ENCODE measurements at regions of chr6 and their contacts with region 1.

Region 1: GRCh38 chr6:33248925-33249731 is 22.5 kb downstream of the VPS52 start:
- DNase-seq: peak; percentile 99
- H3K4me3 ChIP-seq: peak overlapping the region; percentile 37 to 64 (median 54)
- H3K27ac ChIP-seq: peak overlapping the region; percentile 89 to 94 (median 94)
- H3K4me1 ChIP-seq: peaks cover 0 to 27% (median 24%) of the 10 kb centered on the region in 4 donors
- H3K27me3 ChIP-seq: no peaks in the 10 kb centered on the region
- CTCF ChIP-seq: no peak
- EP300 ChIP-seq: no peak
- POLR2A ChIP-seq: peak; percentile 88 to 95

Region 2: DNA sequence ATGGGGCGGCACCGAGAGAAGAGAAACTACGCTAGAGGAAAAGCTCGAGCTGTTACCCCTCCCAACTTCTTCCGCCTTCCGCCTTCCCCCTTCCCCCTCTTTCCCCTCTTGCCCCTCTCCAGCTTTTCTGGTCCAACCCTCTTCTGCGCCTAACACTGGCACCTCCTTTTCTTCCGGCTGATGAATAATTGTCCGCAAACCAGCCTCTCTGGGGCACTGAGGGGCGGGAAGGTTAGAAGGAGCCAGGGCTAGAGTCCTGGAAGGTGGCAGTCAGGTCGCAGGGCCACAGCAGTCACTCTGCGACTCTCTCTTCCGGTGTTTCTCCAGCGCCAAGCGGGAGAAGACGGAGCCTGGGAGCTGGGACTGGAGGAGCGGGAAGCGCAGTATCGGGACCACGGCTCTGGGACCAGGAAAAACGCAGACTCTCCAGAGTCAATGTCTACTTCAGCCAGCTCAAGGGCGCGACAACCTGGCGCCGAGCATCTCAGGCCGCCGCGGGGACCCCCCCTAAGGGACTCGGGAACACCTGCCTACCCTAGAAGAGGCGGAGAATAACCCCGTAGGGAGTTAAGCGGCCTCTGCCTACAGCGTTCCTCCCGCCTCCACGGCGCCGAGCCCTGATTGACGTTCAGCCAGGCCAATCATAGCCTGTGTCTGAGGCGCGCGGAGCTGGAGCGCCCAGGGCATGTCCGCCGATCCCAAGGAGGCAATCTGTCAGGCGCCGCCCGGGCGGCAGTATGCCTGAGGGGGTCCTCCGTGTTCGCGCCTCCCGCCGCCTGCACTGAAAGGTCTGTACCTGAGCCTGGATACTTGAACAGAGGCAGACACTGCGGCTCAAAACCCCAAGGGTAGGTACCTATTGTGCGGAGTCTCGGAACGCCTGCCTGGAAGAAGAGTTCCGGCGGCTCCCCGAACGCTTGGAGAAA is 354.8 kb before region 1 on chr6:
- intact Hi-C with region 1: loop called (anchors 5 kb)
- DNase-seq: peak; percentile 96
- H3K4me3 ChIP-seq: peak overlapping the region; percentile 55 to 75 (median 69)
- H3K27ac ChIP-seq: peak overlapping the region; percentile 82 to 96 (median 92)
- H3K4me1 ChIP-seq: peaks cover 0 to 25% (median 13%) of the 10 kb centered on the region in 4 donors
- H3K27me3 ChIP-seq: no peaks in the 10 kb centered on the region
- CTCF ChIP-seq: no peak
- EP300 ChIP-seq: no peak
- POLR2A ChIP-seq: peak in 1 of 2 donors; percentile 84

Region 3: DNA sequence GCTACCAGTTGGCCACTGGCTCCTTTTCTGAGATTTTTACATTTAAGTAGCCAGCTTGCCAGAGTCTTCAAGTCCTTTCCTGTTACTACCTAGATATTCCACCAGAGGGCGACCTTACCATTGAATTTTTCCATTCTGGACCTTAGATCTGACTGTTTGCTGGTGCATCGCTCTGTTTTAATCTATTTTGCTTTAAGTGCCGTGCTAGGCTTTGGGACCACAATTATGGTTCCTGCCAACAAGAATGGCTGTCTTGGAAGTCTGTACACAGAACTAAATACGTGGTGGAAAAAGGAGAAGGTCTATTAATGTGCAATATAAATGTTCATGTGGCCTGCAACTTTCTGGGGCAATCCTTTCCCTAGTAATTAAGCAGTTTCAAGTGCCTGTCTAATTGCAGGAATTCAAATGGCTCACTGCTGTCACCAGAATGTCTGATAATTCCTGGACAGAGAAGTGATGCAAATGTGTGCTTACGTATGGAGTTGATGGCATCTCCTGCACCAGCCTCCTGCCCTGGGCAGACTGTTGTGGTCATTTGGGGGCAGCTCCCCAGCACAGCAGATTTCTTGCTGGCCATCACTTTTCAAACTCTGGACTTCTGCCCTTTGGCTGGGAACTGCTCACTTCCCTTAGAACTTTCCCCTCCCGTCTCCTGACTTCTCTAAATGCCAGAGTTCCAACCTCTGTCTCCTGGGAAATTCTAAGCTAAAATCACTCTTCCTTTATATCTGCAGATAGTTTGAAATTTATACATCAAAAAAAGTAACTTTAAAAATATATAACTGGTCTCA is 234.1 kb before region 1 on chr6:
- intact Hi-C with region 1: loop called (anchors 2 kb)
- DNase-seq: no peak
- H3K4me3 ChIP-seq: no peak overlapping the region
- H3K27ac ChIP-seq: peak overlapping the region in 2 of 4 donors; percentile 26 to 38
- H3K4me1 ChIP-seq: peaks cover 0 to 19% (median 14%) of the 10 kb centered on the region in 4 donors
- H3K27me3 ChIP-seq: peaks cover 0 to 15% (median 10%) of the 10 kb centered on the region in 3 donors
- CTCF ChIP-seq: peak; percentile 55 to 83 (median 79)
- EP300 ChIP-seq: no peak
- POLR2A ChIP-seq: no peak

Region 4: DNA sequence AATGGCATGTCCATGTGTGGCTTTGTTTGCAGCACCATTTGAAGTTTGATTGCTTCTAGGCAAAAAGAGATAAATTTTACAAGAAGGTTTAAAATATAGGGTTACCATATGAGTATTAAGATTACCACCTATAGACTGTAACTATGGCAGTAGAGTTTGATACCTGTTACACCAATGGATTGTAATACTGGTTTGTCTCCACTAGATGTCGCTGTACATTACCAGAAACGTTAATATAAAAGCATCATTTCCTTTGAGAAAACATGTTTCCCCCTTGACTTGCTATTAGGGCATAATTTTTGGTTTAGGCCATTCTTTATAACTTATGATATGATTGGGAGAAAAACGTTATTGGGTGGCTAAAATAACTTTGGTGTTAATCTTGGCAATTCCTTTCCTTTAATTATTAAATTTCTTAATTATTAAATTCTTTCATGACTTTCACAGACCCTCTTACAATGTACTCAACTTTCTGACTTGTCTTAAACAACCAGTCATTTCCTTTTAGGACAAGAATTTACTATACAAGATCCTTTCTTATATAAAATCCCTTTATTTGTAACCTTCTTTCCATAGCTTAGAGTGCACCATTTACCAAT is 130.5 kb before region 1 on chr6:
- intact Hi-C with region 1: loop called (anchors 1 kb)
- DNase-seq: no peak
- H3K4me3 ChIP-seq: no peak overlapping the region
- H3K27ac ChIP-seq: no peak overlapping the region
- H3K4me1 ChIP-seq: peaks cover 0 to 7% (median 0%) of the 10 kb centered on the region in 4 donors
- H3K27me3 ChIP-seq: peaks cover 19 to 47% (median 26%) of the 10 kb centered on the region in 3 donors
- CTCF ChIP-seq: peak; percentile 32 to 87 (median 74)
- EP300 ChIP-seq: no peak
- POLR2A ChIP-seq: no peak

Region 5: DNA sequence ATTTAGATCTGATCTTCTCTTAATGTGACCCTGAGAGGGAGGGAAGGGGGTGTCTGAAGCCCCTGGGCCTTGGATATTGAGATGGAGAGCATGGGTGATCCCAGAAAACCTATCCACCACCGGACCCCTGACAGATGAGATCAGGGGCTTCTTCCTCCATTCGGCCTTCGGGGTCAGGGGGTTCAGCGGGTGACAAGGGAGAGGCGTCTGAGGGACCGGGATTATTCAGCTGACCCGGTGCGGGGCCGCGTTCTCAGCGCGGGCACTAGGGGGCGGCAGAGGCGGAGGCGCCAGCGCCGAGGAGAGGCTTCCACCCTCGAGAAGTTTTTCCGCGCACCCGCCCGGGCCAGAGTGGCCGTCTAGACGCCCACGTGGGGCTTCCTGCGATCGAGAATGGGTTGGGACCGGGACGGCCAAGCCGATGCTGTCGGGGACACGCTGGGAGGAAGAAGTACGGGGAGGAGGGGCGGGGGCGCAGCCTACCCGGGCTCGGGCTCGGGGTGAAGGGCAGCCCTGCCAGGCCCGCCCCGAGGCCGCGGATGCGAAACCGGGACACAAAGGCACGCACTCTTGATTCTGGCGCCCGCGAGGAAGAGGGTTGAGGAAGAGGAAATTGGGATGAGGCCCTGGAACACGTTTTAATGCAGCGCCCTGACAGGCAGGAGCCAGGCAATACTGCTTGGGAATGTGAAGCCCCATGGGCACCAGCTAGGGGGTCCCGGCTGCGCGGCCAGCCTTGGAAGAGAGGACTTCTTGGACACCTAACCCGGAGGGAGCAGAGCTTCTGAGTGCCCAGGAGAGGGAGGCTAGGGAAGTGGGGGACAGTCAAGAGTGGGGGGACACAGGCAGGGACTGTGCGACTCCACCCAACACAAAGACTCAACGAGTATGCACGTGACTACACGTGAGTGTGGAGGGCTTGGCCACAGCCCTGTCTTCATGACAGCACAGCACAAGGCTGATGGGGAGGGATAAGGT is 87.5 kb before region 1 on chr6:
- intact Hi-C with region 1: loop called (anchors 1 kb)
- DNase-seq: peak; percentile 89
- H3K4me3 ChIP-seq: peak overlapping the region; percentile 40 to 58 (median 45)
- H3K27ac ChIP-seq: peak overlapping the region; percentile 72 to 90 (median 79)
- H3K4me1 ChIP-seq: peaks cover 0 to 21% (median 17%) of the 10 kb centered on the region in 4 donors
- H3K27me3 ChIP-seq: no peaks in the 10 kb centered on the region
- CTCF ChIP-seq: peak; percentile 87 to 94 (median 92)
- EP300 ChIP-seq: no peak
- POLR2A ChIP-seq: no peak

Region 6: DNA sequence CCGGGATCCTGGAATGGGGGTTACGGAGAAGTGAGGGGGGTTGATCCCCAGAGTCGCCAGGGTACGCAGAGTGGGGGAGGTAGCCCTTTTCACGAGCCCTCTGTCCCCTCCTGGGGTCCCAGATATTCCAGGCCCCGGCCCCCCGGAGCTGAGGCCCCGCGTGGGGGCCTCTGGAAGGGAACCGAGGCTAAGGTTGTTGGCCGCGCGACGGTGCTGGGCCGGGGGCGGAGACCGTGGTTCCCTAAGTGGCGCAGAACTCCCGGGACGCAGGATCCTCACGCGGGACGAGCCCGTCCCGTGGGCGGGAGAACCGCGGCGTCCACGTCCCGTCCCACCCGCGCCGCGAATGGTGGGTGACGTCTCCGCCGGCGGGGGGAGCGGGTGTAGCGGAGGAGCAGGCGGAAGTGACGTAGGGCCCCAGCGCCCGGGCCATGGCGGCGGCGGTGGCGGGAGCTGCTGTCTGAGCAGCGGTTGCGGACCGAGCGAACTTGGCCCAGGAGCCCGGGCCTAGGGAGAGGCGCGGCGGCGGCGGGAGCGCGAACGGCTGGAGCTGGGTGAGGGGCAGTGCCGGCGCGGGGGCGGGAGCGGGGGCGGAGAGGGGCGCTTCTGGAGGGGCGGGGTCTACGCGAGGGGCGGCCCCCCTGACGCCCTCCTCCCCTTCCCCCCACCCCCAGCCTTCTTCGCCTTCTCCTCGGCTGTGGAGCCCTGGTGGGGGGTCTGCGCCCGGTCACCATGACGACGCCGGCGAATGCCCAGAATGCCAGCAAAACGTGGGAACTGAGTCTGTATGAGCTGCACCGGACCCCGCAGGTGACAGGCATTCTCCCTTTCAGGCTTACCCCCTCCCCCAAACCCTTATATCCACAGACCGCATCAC is 40.8 kb before region 1 on chr6 and contains the start of gene RING1:
- intact Hi-C with region 1: loop called (anchors 2 kb)
- DNase-seq: peak; percentile 94
- H3K4me3 ChIP-seq: peak within 1 kb of the TSS; percentile 78 to 95 (median 94)
- H3K27ac ChIP-seq: peak within 1 kb of the TSS; percentile 95 to 99 (median 96)
- H3K4me1 ChIP-seq: peaks cover 0 to 48% (median 38%) of the 10 kb centered on the region in 4 donors
- H3K27me3 ChIP-seq: no peaks in the 10 kb centered on the region
- CTCF ChIP-seq: no peak
- EP300 ChIP-seq: peak in 1 of 4 donors; percentile 57
- POLR2A ChIP-seq: peak; percentile 99
- total RNA-seq, gene RING1: 13.2 to 18.1 (median 17.1) TPM

Measured in sigmoid colon (tissue), 7 donors.